PC-3 (cell line): ENCODE measurements at regions of chr16 and their contacts with region 1.

Region 1: GRCh38 chr16:2867987-2868789 is 10.2 kb upstream of the PRSS22 start:
- DNase-seq: peak; percentile 88
- ATAC-seq: peak; percentile 95
- H3K4me3 ChIP-seq: peak overlapping the region; percentile 71
- H3K27ac ChIP-seq: peak overlapping the region; percentile 98
- H3K4me1 ChIP-seq: peaks cover 7% of the 10 kb centered on the region; the same call in 1 of the 2 replicates
- H3K27me3 ChIP-seq: no peaks in the 10 kb centered on the region
- CTCF ChIP-seq: peak; percentile 86

Region 2: DNA sequence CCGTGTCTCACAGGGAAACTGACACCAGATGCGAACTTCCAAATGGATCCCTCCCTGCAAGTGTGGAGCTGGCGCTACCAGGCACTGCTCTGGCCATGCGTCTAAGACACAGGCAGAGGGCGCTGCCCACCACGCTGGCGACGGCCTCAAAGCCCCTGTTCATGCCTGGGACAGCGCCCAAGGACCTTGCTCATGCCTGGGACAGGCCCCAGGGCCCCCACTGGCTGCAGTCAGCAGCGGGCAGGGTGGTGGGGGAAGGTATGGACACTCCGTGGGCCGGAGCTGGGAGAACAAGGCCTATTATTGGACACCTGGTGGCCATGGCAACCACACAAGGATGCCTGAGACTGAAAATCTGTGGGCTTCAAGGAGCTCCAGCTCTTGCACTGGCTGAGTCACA is 29.3 kb before region 1 on chr16:
- CTCF ChIA-PET with region 1: interaction called, 22 read pairs
- POLR2A ChIA-PET with region 1: no interaction called
- intact Hi-C with region 1: loop called (anchors 1 kb)
- DNase-seq: peak; percentile 74
- ATAC-seq: peak; percentile 77
- H3K4me3 ChIP-seq: no peak overlapping the region
- H3K27ac ChIP-seq: peak overlapping the region; percentile 10; the same call in 1 of the 2 replicates
- H3K4me1 ChIP-seq: peaks cover 22% of the 10 kb centered on the region
- H3K27me3 ChIP-seq: no peaks in the 10 kb centered on the region
- CTCF ChIP-seq: peak; percentile 88

Region 3: DNA sequence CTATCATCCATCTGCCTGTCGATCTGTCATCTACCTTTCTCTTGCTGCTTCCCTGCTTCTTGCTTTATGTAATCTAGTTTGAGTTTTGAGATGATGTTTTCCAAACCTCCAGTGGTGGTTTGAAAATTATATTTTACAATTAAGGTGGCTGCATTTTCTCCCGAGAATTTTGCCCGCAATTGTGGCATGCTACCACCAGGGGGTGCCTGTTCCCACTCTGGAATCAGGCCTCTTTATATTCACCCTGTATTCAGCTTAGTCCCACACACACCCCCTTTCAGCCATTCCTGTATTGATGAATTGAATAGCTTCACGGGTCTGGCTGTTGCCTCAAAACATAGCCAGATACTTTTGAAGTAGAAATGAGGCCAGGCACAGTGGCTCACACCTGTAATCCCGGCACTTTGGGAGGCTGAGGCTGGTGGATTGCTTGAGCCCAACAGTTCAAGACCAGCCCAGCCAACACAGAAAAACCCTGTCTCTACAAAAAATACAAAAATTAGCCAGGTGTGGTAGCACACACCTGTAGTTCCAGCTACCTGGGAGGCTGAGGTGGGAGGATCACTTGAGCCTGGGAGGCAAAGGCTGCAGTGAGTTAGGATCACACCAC is 13.4 kb before region 1 on chr16:
- CTCF ChIA-PET with region 1: interaction called, 4 read pairs
- POLR2A ChIA-PET with region 1: no interaction called
- intact Hi-C with region 1: loop called (anchors 1 kb)
- DNase-seq: peak; percentile 51
- ATAC-seq: no peak
- H3K4me3 ChIP-seq: no peak overlapping the region
- H3K27ac ChIP-seq: no peak overlapping the region
- H3K4me1 ChIP-seq: peaks cover 21% of the 10 kb centered on the region
- H3K27me3 ChIP-seq: no peaks in the 10 kb centered on the region
- CTCF ChIP-seq: peak; percentile 79